Naive thymus-derived CD8-positive, alpha-beta T cell (primary cell): ENCODE measurements at regions of chr19 and their contacts with region 1.

Region 1: GRCh38 chr19:3035542-3036118 is 6.5 kb upstream of the TLE2 start:
- DNase-seq: peak; percentile 79 to 99 (median 95)
- ATAC-seq: peak; percentile 88 to 92
- H3K4me3 Mint-ChIP-seq: peak overlapping the region; percentile 87 to 97 (median 93)
- H3K27ac Mint-ChIP-seq: peak overlapping the region; percentile 82 to 99 (median 98)
- H3K4me1 Mint-ChIP-seq: peaks cover 28 to 44% (median 36%) of the 10 kb centered on the region in 4 donors
- H3K27me3 Mint-ChIP-seq: peaks cover 0 to 4% (median 0%) of the 10 kb centered on the region in 5 donors

Region 2: DNA sequence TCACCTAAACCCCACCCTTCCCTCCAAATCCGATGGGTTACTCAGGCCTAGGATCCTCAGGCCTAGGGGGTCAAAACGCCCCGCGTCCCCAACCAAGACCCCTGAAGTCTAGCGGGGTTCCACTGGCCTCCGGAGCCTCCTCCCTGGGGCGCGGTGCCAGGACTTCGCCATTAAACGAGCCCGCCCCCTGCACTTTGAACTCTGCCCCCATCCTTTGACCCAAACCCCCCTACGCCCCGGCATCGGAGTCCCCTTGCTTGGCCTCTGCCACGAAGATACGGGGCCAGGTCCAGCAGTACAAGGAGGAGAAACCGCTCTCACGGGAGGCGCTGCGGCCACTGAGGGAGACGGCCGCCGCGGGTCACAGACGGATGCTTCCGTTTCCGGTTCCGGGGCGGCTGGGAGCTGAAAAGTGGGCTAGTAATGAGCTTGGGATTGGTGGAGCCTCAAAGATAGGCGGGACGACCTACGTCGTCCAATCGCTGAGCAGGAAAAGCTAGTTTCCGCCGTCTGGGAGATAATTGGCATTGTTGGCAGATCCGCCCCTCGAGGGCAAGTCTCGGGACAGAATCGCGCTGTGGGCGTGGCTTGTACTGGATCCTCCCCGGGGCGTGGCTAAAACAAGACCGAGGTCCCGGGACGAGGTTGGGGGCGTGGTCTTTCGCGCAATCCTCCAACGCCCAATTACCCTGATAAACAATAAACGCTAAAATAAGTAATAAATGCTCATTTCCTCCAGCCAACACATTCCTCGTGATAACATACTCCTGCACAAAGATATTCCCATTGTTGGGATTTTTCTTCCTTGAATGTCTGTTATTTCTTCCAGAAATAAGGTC is 85.1 kb before region 1 on chr19:
- POLR2A ChIA-PET with region 1: interaction called, 29 read pairs
- DNase-seq: peak; percentile 99 to 100 (median 100)
- ATAC-seq: peak; percentile 95 to 96
- H3K4me3 Mint-ChIP-seq: peak overlapping the region; percentile 91 to 98 (median 96)
- H3K27ac Mint-ChIP-seq: peak overlapping the region; percentile 95 to 99 (median 98)
- H3K4me1 Mint-ChIP-seq: peaks cover 9 to 30% (median 28%) of the 10 kb centered on the region in 4 donors
- H3K27me3 Mint-ChIP-seq: no peaks in the 10 kb centered on the region

Region 3: GRCh38 chr19:3047425-3048189 is 12.0 kb after region 1 on chr19:
- POLR2A ChIA-PET with region 1: interaction called, 519 read pairs
- DNase-seq: peak; percentile 48 to 83 (median 62)
- ATAC-seq: peak; percentile 87 to 91
- H3K4me3 Mint-ChIP-seq: peak overlapping the region; percentile 86 to 97 (median 92)
- H3K27ac Mint-ChIP-seq: peak overlapping the region; percentile 83 to 97 (median 94)
- H3K4me1 Mint-ChIP-seq: peaks cover 12 to 33% (median 29%) of the 10 kb centered on the region in 4 donors
- H3K27me3 Mint-ChIP-seq: peaks cover 0 to 2% (median 0%) of the 10 kb centered on the region in 5 donors

Region 4: GRCh38 chr19:3075895-3076431 is 40.3 kb after region 1 on chr19:
- POLR2A ChIA-PET with region 1: interaction called, 10 read pairs
- DNase-seq: peak; percentile 58 to 85 (median 78)
- ATAC-seq: peak; percentile 97 to 98
- H3K4me3 Mint-ChIP-seq: peak overlapping the region in 3 of 10 donors; percentile 10 to 55 (median 52)
- H3K27ac Mint-ChIP-seq: peak overlapping the region in 1 of 10 donors; percentile 31
- H3K4me1 Mint-ChIP-seq: peaks cover 3 to 10% (median 6%) of the 10 kb centered on the region in 4 donors
- H3K27me3 Mint-ChIP-seq: no peaks in the 10 kb centered on the region

Region 5: DNA sequence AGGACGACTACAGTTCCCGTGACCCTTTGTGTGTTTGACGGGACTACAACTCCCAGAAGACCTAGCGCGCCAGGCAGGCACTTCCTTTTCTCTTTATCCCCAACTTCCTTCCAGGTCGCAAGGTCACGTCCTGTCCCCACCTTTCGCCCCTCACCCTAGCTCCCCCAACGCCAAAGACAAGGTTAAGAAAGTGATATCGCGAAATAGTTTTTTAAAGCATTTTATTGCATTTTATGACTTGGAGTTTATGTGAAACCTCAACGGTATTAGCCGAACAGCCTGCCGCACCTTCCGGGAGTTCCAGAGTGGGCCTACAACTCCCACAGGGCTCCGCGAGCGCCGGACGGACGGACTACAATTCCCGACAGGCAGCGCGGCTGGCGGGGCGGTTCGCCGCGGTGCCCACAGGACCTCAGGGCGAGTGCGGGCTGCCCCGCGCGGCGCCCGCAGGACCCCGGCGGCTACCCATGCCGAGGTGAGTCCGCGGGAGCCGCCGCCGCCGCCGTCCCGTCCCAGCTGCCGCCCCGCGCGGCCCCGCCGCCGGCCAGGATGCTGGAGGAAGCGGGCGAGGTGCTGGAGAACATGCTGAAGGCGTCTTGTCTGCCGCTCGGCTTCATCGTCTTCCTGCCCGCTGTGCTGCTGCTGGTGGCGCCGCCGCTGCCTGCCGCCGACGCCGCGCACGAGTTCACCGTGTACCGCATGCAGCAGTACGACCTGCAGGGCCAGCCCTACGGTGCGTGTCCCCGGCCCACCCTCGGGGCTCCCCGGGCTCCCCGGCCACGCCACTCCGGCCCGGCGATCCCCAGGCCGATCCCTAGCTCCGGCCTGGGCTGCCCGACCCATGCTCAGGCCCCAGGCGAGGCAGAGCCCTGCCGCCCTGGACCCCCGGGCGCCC is 150.1 kb after region 1 on chr19 and contains the start of gene NCLN:
- POLR2A ChIA-PET with region 1: interaction called, 21 read pairs
- DNase-seq: peak; percentile 86 to 99 (median 92)
- ATAC-seq: peak; percentile 82 to 88
- H3K4me3 Mint-ChIP-seq: peak within 1 kb of the TSS; percentile 84 to 98 (median 94)
- H3K27ac Mint-ChIP-seq: peak within 1 kb of the TSS; percentile 51 to 99 (median 93)
- H3K4me1 Mint-ChIP-seq: peaks cover 22 to 70% (median 61%) of the 10 kb centered on the region in 4 donors
- H3K27me3 Mint-ChIP-seq: no peaks in the 10 kb centered on the region
- polyA plus RNA-seq, gene NCLN: 23.9 to 44.7 (median 25.5) TPM